CD8-positive, alpha-beta T cell (primary cell): ENCODE measurements at regions of chr3 and their contacts with region 1.

Region 1: GRCh38 chr3:179322286-179323196 is at the start of gene ZNF639:
- DNase-seq: peak; percentile 70 to 96 (median 88)
- ATAC-seq: peak; percentile 87
- H3K4me3 ChIP-seq: peak within 1 kb of the TSS; percentile 84 to 86
- H3K4me3 Mint-ChIP-seq: peak within 1 kb of the TSS; percentile 84
- H3K27ac ChIP-seq: peak within 1 kb of the TSS; percentile 83 to 91
- H3K27ac Mint-ChIP-seq: peak within 1 kb of the TSS; percentile 96
- H3K4me1 ChIP-seq: peaks cover 24% of the 10 kb centered on the region
- H3K4me1 Mint-ChIP-seq: peaks cover 33% of the 10 kb centered on the region
- H3K27me3 ChIP-seq: no peaks in the 10 kb centered on the region
- H3K27me3 Mint-ChIP-seq: no peaks in the 10 kb centered on the region
- CTCF ChIP-seq: peak; percentile 87
- total RNA-seq, gene ZNF639: 103 to 112 TPM

Region 2: GRCh38 chr3:178436773-178437172 is 885.8 kb before region 1 on chr3:
- CTCF ChIA-PET with region 1: no interaction called
- POLR2A ChIA-PET with region 1: no interaction called
- intact Hi-C with region 1: loop called in 1 of 2 experiments (anchors 5 kb)
- DNase-seq: peak in 1 of 9 experiments; percentile 12
- ATAC-seq: no peak
- H3K4me3 ChIP-seq: no peak overlapping the region
- H3K4me3 Mint-ChIP-seq: no peak overlapping the region
- H3K27ac ChIP-seq: no peak overlapping the region
- H3K27ac Mint-ChIP-seq: no peak overlapping the region
- H3K4me1 ChIP-seq: no peaks in the 10 kb centered on the region
- H3K4me1 Mint-ChIP-seq: no peaks in the 10 kb centered on the region
- H3K27me3 ChIP-seq: no peaks in the 10 kb centered on the region
- H3K27me3 Mint-ChIP-seq: peaks cover 2% of the 10 kb centered on the region
- CTCF ChIP-seq: peak; percentile 31

Region 3: GRCh38 chr3:179108086-179108485 is 214.5 kb before region 1 on chr3:
- CTCF ChIA-PET with region 1: interaction called, 16 read pairs
- POLR2A ChIA-PET with region 1: no interaction called
- intact Hi-C with region 1: no loop called
- DNase-seq: no peak
- ATAC-seq: no peak
- H3K4me3 ChIP-seq: no peak overlapping the region
- H3K4me3 Mint-ChIP-seq: no peak overlapping the region
- H3K27ac ChIP-seq: no peak overlapping the region
- H3K27ac Mint-ChIP-seq: no peak overlapping the region
- H3K4me1 ChIP-seq: no peaks in the 10 kb centered on the region
- H3K4me1 Mint-ChIP-seq: peaks cover 1% of the 10 kb centered on the region
- H3K27me3 ChIP-seq: no peaks in the 10 kb centered on the region
- H3K27me3 Mint-ChIP-seq: peaks cover 4% of the 10 kb centered on the region
- CTCF ChIP-seq: no peak

Region 4: GRCh38 chr3:179260949-179261765 is 61.4 kb before region 1 on chr3:
- CTCF ChIA-PET with region 1: no interaction called
- POLR2A ChIA-PET with region 1: no interaction called
- intact Hi-C with region 1: loop called in 1 of 2 experiments (anchors 5 kb)
- DNase-seq: peak; percentile 34 to 80 (median 62)
- ATAC-seq: peak; percentile 97
- H3K4me3 ChIP-seq: peak overlapping the region; percentile 49 to 54
- H3K4me3 Mint-ChIP-seq: peak overlapping the region; percentile 83
- H3K27ac ChIP-seq: peak overlapping the region in 1 of 2 experiments; percentile 20
- H3K27ac Mint-ChIP-seq: peak overlapping the region; percentile 24
- H3K4me1 ChIP-seq: peaks cover 6% of the 10 kb centered on the region
- H3K4me1 Mint-ChIP-seq: peaks cover 24% of the 10 kb centered on the region
- H3K27me3 ChIP-seq: no peaks in the 10 kb centered on the region
- H3K27me3 Mint-ChIP-seq: no peaks in the 10 kb centered on the region
- CTCF ChIP-seq: no peak

Region 5: GRCh38 chr3:179562591-179563270 is 240.2 kb after region 1 on chr3 and contains the start of gene ACTL6A:
- CTCF ChIA-PET with region 1: interaction called, 3 read pairs
- POLR2A ChIA-PET with region 1: interaction called, 3 read pairs
- intact Hi-C with region 1: loop called (anchors 1 to 5 kb)
- DNase-seq: peak; percentile 95 to 99 (median 98)
- ATAC-seq: peak; percentile 90
- H3K4me3 ChIP-seq: peak within 1 kb of the TSS; percentile 71 to 92
- H3K4me3 Mint-ChIP-seq: peak within 1 kb of the TSS; percentile 99
- H3K27ac ChIP-seq: peak within 1 kb of the TSS; percentile 51 to 66
- H3K27ac Mint-ChIP-seq: peak within 1 kb of the TSS; percentile 96
- H3K4me1 ChIP-seq: peaks cover 16% of the 10 kb centered on the region
- H3K4me1 Mint-ChIP-seq: peaks cover 31% of the 10 kb centered on the region
- H3K27me3 ChIP-seq: no peaks in the 10 kb centered on the region
- H3K27me3 Mint-ChIP-seq: peaks cover 3% of the 10 kb centered on the region
- CTCF ChIP-seq: no peak
- total RNA-seq, gene ACTL6A: 18.2 to 18.7 TPM

Region 6: GRCh38 chr3:180601688-180602666 is 1279.4 kb after region 1 on chr3 and contains the start of gene TTC14:
- CTCF ChIA-PET with region 1: no interaction called
- POLR2A ChIA-PET with region 1: no interaction called
- intact Hi-C with region 1: loop called in 1 of 2 experiments (anchors 10 kb)
- DNase-seq: peak; percentile 86 to 97 (median 93)
- ATAC-seq: peak; percentile 86
- H3K4me3 ChIP-seq: peak within 1 kb of the TSS; percentile 93 to 97
- H3K4me3 Mint-ChIP-seq: peak within 1 kb of the TSS; percentile 97
- H3K27ac ChIP-seq: peak within 1 kb of the TSS; percentile 94 to 95
- H3K27ac Mint-ChIP-seq: peak within 1 kb of the TSS; percentile 94
- H3K4me1 ChIP-seq: peaks cover 11% of the 10 kb centered on the region
- H3K4me1 Mint-ChIP-seq: peaks cover 43% of the 10 kb centered on the region
- H3K27me3 ChIP-seq: no peaks in the 10 kb centered on the region
- H3K27me3 Mint-ChIP-seq: peaks cover 15% of the 10 kb centered on the region
- CTCF ChIP-seq: no peak
- total RNA-seq, gene TTC14: 70.2 to 84.8 TPM